Activated CD8-positive, alpha-beta T cell treated with anti-CD3 and anti-CD28 coated beads, Interleukin-2, amount 10 ng/mL, durations not matched to agents 7 days and 5 days (primary cell): ENCODE measurements at regions of chr1 and their contacts with region 1.

Region 1: DNA sequence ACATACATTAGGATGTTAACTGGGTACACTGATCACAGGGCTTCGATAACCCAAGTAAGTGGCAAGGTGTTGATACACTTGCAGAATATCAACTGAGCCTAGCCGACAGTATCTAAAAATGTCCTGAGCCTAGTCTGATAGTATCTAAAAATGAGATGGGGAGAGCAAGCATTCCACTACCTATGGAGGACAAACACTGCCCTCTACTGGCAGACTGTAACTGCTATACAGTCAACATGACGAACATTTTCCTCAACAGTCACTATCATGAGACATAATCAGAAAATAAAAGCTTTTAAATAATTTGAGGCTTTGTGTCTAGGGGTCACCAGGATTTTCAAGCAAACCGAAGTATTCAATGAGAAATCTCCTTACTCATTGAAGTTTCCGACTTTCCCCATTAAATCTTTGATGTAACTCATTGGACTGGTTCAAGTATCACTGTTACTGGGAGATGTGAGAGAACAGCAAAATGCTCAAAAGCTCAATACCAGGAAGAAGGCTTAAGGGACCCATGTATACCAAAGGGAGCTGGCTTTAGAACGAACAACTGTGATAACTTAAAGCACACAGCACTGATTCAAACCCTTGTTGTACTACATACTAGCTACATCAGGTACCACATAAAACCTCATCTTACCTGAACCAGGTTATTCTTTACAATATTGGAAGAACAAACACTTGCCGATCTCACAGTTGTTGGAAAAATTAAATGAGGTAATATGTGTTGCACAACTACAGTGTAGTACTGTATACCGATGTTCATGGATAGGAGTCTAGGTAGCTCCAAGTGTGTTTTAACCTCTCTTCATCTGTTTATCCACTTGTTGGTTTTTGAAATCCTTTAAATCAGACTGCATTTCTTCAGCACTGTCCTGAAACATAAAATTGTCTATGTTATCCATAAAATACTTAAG is 31.1 kb upstream of the SLC45A3 start:
- DNase-seq: peak; percentile 80
- ATAC-seq: peak; percentile 90
- H3K4me3 Mint-ChIP-seq: no peak overlapping the region
- H3K27ac Mint-ChIP-seq: peak overlapping the region; percentile 31
- H3K4me1 Mint-ChIP-seq: peaks cover 12% of the 10 kb centered on the region
- H3K27me3 Mint-ChIP-seq: no peaks in the 10 kb centered on the region

Region 2: DNA sequence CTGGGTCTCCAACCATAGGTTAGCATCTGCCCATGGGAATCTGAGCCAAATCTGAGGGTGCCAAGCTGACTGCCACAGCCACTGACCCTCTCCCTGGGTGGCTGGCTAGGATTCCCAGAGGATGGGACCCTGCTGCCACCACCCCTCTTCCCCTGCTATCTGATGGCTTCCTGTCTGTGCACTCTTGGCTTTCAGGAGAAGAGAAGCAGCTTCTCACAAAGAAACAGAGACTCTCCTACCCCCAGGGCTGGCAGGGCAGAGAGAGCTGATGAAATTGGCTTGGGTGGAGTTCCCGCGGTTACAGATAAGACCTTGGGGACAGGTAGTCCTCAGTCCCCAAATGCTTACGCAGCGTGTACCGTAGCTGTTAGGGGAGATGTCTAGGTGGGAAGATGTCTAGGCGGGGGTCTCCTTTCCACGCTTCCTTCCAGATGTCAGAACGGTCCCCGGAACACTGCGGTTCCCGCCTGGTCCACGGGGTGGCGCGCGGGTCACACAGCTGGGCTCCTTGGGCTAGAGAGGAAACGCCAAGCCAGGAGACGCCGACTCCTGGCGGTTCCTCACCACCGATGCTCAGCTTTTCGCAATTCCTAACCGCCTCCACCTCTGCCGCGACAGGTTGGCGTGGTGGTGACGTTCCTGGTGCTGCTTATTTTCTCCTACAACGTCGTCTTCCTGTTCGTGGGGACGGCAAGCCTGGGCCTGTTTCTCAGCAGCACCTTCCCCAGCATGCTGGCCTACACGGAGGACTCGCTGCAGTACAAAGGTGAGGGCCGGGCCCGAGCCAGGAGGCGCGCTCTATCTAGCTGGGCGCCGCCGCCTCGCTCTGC is 119.6 kb before region 1 on chr1:
- CTCF ChIA-PET with region 1: interaction called, 32 read pairs
- POLR2A ChIA-PET with region 1: no interaction called
- DNase-seq: peak; percentile 91
- ATAC-seq: peak; percentile 90
- H3K4me3 Mint-ChIP-seq: peak overlapping the region; percentile 81
- H3K27ac Mint-ChIP-seq: peak overlapping the region; percentile 95
- H3K4me1 Mint-ChIP-seq: peaks cover 42% of the 10 kb centered on the region
- H3K27me3 Mint-ChIP-seq: peaks cover 3% of the 10 kb centered on the region

Region 3: DNA sequence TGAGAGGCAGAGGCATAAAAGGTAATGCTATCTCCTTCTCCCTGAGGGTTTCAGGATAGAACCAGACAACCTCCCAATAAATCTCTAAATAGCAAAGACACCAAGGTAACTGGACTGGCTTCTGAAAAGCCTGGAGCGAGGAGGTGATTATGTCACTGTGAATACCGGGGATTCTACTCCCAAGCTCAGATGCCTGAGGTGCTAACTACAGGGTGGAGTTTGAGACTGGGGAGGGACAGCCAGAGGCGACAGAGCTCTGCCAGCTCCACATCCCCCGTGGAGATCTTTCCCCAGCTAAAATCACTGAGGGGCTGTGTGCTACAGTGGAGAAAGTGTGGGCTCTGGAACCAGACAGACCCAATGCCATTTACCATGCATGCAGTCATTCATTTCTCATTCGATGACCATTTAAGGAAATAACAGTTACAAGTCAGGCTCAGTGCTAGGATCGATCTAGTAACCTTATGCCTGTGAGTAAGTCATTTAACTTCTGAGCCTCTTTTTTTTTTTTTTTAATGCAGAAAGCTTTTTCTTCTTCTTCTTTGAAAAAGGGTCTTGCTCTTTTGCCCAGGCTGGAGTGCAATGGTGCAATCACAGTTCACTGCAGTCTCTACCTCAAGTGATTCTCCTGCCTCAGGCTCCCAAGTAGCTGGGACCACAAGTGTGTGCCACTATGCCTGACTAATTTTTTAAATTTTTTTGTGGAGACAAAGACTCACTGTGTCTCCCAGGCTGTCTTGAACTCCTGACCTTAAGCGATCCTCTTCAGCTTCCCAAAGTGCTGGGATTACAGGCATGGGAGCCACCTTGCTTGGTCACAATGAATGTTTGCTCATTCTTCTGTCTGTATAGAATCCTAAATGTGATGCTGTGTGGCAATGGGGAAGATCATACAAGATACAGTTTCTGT is 22.9 kb before region 1 on chr1:
- CTCF ChIA-PET with region 1: interaction called, 13 read pairs
- POLR2A ChIA-PET with region 1: no interaction called
- DNase-seq: no peak
- ATAC-seq: no peak
- H3K4me3 Mint-ChIP-seq: no peak overlapping the region
- H3K27ac Mint-ChIP-seq: no peak overlapping the region
- H3K4me1 Mint-ChIP-seq: peaks cover 5% of the 10 kb centered on the region
- H3K27me3 Mint-ChIP-seq: peaks cover 18% of the 10 kb centered on the region

Region 4: GRCh38 chr1:205729945-205730610 is 18.7 kb after region 1 on chr1:
- CTCF ChIA-PET with region 1: interaction called, 67 read pairs
- POLR2A ChIA-PET with region 1: interaction called, 6 read pairs
- DNase-seq: no peak
- ATAC-seq: no peak
- H3K4me3 Mint-ChIP-seq: no peak overlapping the region
- H3K27ac Mint-ChIP-seq: no peak overlapping the region
- H3K4me1 Mint-ChIP-seq: peaks cover 25% of the 10 kb centered on the region
- H3K27me3 Mint-ChIP-seq: no peaks in the 10 kb centered on the region

Region 5: GRCh38 chr1:205750138-205751035 is 39.0 kb after region 1 on chr1 and contains the start of gene NUCKS1:
- CTCF ChIA-PET with region 1: interaction called, 31 read pairs
- POLR2A ChIA-PET with region 1: interaction called, 7 read pairs
- DNase-seq: peak; percentile 98
- ATAC-seq: peak; percentile 89
- H3K4me3 Mint-ChIP-seq: peak within 1 kb of the TSS; percentile 98
- H3K27ac Mint-ChIP-seq: peak within 1 kb of the TSS; percentile 98
- H3K4me1 Mint-ChIP-seq: peaks cover 37% of the 10 kb centered on the region
- H3K27me3 Mint-ChIP-seq: peaks cover 2% of the 10 kb centered on the region
- total RNA-seq, gene NUCKS1: 236 to 237 TPM

Region 6: GRCh38 chr1:205783904-205784303 is 72.5 kb after region 1 on chr1:
- CTCF ChIA-PET with region 1: interaction called, 65 read pairs
- POLR2A ChIA-PET with region 1: no interaction called
- DNase-seq: no peak
- ATAC-seq: no peak
- H3K4me3 Mint-ChIP-seq: no peak overlapping the region
- H3K27ac Mint-ChIP-seq: no peak overlapping the region
- H3K4me1 Mint-ChIP-seq: peaks cover 16% of the 10 kb centered on the region
- H3K27me3 Mint-ChIP-seq: no peaks in the 10 kb centered on the region